Transverse colon (tissue), 4 donors: ENCODE measurements at regions of chr11 and their contacts with region 1.

Region 1: DNA sequence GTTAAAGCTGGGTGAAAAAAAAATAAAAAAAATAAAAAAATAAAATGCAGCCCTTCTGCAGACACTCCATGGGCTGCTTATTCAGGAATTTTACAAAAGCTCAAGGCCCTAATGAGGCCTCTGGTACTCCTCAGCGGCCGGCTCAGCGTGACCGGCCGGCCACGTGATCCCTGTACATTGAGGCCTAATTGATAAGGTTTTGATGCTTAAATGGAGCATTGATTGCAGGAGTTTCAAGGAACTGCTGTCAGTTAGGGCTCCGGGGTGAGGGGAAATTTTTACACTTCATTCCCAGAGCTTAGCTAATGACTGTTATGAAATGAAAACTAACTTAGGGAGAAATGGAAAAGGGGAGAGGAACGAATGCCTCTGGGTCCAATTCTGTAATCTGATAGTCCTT is 368.8 kb upstream of the KIRREL3 start:
- DNase-seq: no peak
- H3K4me3 ChIP-seq: no peak overlapping the region
- H3K27ac ChIP-seq: no peak overlapping the region
- H3K4me1 ChIP-seq: no peaks in the 10 kb centered on the region
- H3K27me3 ChIP-seq: no peaks in the 10 kb centered on the region
- CTCF ChIP-seq: no peak
- EP300 ChIP-seq: no peak
- POLR2A ChIP-seq: no peak

Region 2: DNA sequence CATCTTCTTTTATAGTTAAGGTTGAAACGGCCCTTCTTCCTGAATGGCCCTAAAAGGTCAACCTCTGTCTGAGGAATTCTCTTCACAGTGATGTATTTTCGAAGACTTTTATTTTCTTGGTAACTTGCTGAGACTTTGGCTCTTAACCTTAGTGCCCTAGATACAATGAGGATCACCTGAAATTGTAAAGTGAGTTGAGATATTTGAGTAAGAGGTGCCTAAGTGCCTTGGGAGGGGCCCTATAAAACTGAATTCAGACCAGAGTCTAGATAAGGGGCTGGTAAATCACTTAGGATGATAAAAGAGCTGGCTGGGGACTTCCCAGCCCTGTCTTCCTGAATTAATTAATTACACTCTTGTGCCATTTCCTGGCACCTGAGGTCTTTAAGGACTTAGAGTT is 136.8 kb after region 1 on chr11:
- in situ Hi-C with region 1: no loop called
- intact Hi-C with region 1: no loop called
- DNase-seq: no peak
- H3K4me3 ChIP-seq: no peak overlapping the region
- H3K27ac ChIP-seq: no peak overlapping the region
- H3K4me1 ChIP-seq: peaks cover 0 to 3% (median 0%) of the 10 kb centered on the region in 4 donors
- H3K27me3 ChIP-seq: no peaks in the 10 kb centered on the region
- CTCF ChIP-seq: no peak
- EP300 ChIP-seq: no peak
- POLR2A ChIP-seq: no peak

Region 3: DNA sequence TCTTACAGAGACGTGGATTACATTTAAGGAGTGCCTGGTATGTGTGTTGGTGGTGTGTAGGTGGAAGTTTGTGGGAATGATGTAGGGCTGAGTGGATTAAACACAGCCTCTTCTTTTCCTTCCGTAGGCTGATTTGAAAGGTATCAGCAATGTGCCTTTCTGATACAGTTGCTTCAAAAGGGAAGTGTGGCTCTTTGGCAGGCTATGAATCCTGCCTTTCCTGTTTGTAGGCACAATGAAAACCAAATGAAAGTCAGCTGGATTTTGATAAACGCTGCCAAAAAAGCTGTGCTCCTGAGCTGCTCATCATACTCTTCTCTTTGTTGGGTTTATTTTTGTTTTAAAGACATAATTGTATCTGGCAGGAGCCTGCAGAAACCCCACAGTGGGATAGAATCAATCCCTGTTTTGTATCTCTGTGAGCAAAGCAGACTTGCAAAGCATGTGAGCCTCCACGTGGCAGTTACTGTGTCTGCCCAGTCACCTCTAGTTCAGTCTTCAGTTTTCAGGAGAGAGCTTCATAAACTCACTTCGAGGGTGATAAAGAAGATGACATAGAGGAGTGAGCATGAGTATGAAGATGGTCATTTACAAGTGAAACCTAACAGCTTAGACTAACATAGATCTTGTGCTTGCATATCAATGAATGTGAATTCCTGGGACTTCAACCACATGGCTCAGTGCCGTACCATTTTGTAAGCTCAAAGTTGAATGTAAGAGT is 286.9 kb after region 1 on chr11:
- in situ Hi-C with region 1: no loop called
- intact Hi-C with region 1: no loop called
- DNase-seq: no peak
- H3K4me3 ChIP-seq: no peak overlapping the region
- H3K27ac ChIP-seq: no peak overlapping the region
- H3K4me1 ChIP-seq: no peaks in the 10 kb centered on the region
- H3K27me3 ChIP-seq: no peaks in the 10 kb centered on the region
- CTCF ChIP-seq: no peak
- EP300 ChIP-seq: no peak
- POLR2A ChIP-seq: no peak

Region 4: GRCh38 chr11:127679816-127680545 is 310.6 kb after region 1 on chr11:
- in situ Hi-C with region 1: no loop called
- intact Hi-C with region 1: loop called (anchors 5 kb)
- DNase-seq: no peak
- H3K4me3 ChIP-seq: no peak overlapping the region
- H3K27ac ChIP-seq: no peak overlapping the region
- H3K4me1 ChIP-seq: peaks cover 0 to 8% (median 6%) of the 10 kb centered on the region in 4 donors
- H3K27me3 ChIP-seq: no peaks in the 10 kb centered on the region
- CTCF ChIP-seq: no peak
- EP300 ChIP-seq: no peak
- POLR2A ChIP-seq: no peak